ENCODE measurements at regions of chr5 and their contacts with region 1.

Region 1: DNA sequence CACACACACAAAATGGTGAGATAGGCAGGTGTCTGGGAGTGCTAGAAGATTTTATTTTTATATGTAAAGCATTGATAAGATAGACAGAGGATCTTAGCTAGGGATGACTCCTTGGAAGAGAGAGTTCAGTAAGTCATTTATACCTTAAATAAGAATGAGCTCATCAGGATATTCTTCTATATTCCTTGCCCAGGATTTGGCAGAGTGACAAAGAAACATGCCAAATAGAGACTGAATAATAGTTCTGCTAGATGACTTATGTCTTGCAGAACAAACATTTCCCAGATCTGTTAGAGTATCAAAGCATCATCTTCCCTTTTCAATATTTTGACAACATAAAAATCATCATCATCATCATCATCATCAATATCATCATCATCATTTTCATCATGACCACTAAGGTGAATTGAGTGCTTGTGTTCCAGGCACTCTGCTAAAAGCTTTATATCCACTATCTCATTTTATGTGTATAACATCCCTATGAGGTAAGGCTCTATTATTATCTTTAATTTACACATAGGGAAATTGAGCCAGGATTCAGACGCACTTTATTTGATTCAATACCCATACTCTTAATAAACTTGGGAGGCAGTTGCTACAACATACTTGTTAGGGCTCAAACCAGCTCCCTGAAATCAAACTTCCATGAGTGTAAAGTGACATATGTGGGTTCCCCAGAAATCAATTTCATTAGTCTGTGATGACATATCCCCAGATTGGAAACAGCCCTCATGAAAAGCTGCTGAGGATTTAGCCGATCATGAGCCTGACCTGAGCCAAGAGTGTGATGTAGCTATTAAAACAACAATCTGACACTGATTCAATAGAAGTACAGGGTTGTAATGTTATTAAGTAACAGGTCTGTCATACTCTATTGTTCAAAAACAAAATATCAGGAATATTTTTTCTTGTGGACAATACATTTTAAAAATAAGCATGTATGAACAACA is 176.3 kb upstream of the SEMA6A start:
- DNase-seq: no peak
- CTCF ChIP-seq: no peak

Region 2: GRCh38 chr5:116740771-116741170 is 10.1 kb before region 1 on chr5:
- CTCF ChIA-PET with region 1: interaction called, 10 read pairs
- POLR2A ChIA-PET with region 1: no interaction called
- DNase-seq: no peak
- CTCF ChIP-seq: no peak